ENCODE measurements at regions of chr2 and their contacts with region 1.

Region 1: GRCh38 chr2:64586883-64587481 is 62.9 kb downstream of the AFTPH start:
- DNase-seq: no peak
- H3K4me3 ChIP-seq: no peak overlapping the region
- H3K27ac ChIP-seq: no peak overlapping the region
- H3K4me1 ChIP-seq: peaks cover 0 to 5% (median 0%) of the 10 kb centered on the region in 4 donors
- H3K27me3 ChIP-seq: no peaks in the 10 kb centered on the region
- CTCF ChIP-seq: peak; percentile 64 to 69 (median 67)
- EP300 ChIP-seq: no peak
- POLR2A ChIP-seq: no peak

Region 2: DNA sequence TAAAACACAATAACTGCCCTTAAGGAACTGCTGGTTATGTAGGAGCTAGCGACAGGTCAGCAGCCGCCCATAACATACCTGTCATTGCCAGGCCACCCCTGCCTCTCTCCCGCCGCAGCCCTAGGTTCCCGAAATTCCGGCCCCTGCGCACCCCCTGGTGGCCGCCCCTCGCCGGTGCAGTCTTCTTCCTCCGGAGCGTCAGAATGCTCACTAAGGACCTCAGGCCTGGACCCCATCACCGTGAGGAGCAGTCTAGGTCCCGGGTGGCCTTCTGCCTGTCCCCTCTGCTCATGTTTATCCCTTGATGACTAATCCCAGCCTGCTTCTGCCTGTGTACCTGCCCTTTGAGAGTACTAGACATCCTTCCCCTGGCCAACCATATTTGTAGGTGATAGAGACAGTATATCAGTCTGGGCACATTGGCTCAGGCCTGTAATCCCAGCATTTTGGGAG is 286.5 kb after region 1 on chr2:
- intact Hi-C with region 1: loop called (anchors 2 kb)
- DNase-seq: peak; percentile 94
- H3K4me3 ChIP-seq: peak overlapping the region; percentile 12 to 47 (median 32)
- H3K27ac ChIP-seq: no peak overlapping the region
- H3K4me1 ChIP-seq: peaks cover 16 to 19% (median 18%) of the 10 kb centered on the region in 4 donors
- H3K27me3 ChIP-seq: no peaks in the 10 kb centered on the region
- CTCF ChIP-seq: peak in 2 of 3 experiments; percentile 94 to 95
- EP300 ChIP-seq: no peak
- POLR2A ChIP-seq: no peak

Region 3: DNA sequence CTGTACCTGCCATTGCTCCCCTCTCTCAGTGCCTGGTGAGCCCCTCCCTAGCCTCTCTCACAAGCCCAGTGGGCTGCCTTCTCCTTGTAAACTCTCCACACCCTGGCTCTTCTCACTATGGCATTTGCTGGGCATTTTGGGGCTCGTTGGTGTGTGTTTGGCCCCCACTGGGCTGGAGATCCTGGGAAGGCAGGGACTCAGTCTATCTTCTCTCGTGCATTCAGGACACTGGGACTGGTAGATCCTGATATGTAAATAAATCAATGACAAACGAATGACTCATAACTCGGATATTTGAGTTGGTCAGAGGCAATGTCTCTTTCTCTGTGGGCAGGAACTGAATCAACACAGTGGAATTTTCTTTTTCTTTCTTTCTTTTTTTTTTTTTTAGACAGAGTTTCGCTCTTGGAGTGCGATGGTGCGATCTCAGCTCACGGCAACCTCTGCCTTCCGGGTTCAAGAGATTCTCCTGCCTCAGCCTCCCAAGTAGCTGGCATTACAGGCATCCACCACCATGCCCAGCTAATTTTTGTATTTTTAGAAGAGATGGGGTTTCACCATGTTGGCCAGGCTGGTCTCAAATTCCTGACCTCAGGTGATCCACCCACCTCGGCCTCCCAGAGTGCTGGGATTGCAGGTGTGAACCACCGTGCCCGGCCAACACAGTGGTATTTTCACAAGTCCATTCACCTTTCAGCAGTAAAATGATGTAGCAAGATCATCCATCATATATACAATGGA is 990.0 kb after region 1 on chr2:
- intact Hi-C with region 1: loop called (anchors 10 kb)
- DNase-seq: no peak
- H3K4me3 ChIP-seq: no peak overlapping the region
- H3K27ac ChIP-seq: no peak overlapping the region
- H3K4me1 ChIP-seq: peaks cover 0 to 8% (median 1%) of the 10 kb centered on the region in 4 donors
- H3K27me3 ChIP-seq: no peaks in the 10 kb centered on the region
- CTCF ChIP-seq: no peak
- EP300 ChIP-seq: no peak
- POLR2A ChIP-seq: no peak

Measured in esophagus muscularis mucosa (tissue), 4 donors.